BJ (cell line): ENCODE measurements at regions of chr10 and their contacts with region 1.

Region 1: DNA sequence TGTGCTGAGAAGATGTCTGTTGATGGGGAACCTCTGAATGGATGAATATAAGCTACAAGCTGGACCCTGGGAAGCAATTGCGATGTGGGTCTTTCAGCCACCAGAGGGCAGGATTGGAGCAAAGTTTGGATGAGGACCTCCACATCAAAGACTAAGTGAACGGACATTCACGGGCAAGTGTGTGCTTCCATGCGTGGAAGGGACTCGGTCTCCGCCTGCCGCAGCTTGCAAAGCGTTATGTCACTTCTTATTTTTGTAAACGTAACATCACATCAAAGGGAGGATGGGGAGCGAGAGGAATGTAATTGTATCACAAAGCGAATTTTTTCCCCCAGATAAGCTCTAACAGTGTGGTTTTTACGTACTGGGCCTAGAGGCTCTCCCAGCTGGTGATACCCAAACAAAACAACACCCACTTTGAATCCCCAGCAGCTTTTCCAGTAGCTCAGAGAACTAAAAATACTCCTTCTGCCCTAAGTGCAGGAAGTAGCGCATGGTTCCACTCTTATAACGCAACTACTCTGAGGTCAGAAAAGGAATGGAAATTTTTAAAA is 65.0 kb downstream of the VWA2 start:
- DNase-seq: peak; percentile 40
- H3K4me3 ChIP-seq: peak overlapping the region; percentile 23
- H3K27me3 ChIP-seq: peaks cover 2% of the 10 kb centered on the region; the same call in 1 of the 2 replicates
- CTCF ChIP-seq: peak; percentile 81

Region 2: DNA sequence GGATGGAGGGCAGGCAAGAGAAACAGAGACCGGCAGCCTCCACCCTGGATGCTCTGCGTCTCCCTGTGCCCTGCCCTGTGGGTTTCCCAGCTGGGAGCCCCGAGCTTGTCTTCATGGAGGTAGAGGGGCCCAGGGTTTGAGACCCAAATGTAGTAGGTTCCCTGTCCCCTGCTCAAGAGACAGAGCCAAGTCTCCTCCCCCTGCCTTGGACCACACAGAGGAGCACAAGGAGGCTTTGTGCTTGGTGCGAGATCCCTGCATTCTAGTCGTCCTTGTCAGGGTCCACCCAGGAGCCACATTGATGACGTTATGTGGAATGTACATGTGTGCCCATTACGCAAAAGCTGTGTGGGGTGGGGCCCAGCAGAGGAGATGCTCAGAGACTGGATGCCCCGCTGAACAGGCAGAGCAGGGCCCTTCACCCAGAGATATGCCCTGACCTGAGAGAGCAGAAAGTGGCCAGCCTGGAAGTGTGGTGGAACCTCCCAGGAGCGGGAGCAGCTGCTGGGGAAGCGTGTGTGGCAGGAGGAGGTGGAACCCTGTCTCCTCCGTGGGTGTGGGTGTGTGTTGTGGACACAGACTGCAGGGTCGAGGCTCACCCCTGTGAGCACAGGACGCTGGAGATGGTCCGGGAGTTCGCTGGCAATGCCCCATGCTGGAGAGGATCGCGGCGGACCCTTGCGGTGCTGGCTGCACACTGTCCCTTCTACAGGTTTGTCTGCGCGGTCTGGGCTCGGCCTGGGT is 25.8 kb before region 1 on chr10:
- CTCF ChIA-PET with region 1: interaction called, 11 read pairs
- POLR2A ChIA-PET with region 1: no interaction called
- DNase-seq: no peak
- H3K4me3 ChIP-seq: no peak overlapping the region
- H3K27me3 ChIP-seq: peaks cover 12% of the 10 kb centered on the region
- CTCF ChIP-seq: no peak

Region 3: DNA sequence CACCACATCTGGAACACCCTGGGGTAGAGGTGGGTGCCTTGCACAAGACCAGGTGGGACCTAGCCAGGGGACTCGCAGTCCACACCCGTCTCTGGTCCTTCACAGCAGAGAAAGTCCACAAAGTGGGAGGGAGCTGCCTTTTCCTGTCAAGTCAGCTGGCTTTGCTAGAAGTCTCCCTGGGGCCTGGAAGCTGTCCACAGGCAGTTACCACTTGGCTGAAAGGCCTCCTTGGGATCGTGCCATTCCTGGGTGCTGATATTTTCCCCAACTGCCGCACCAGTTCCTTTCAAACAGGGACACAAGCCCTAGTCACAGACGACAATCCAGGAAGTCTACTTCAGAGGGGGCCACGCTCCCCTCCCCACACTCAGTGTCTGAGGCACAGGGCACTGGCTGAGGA is 24.8 kb after region 1 on chr10:
- CTCF ChIA-PET with region 1: interaction called, 14 read pairs
- POLR2A ChIA-PET with region 1: interaction called, 6 read pairs
- DNase-seq: no peak
- H3K4me3 ChIP-seq: no peak overlapping the region
- H3K27me3 ChIP-seq: no peaks in the 10 kb centered on the region; the same call in 1 of the 2 replicates
- CTCF ChIP-seq: no peak

Region 4: GRCh38 chr10:114437456-114438292 is 133.6 kb after region 1 on chr10:
- CTCF ChIA-PET with region 1: interaction called, 28 read pairs
- POLR2A ChIA-PET with region 1: no interaction called
- DNase-seq: no peak
- H3K4me3 ChIP-seq: no peak overlapping the region
- H3K27me3 ChIP-seq: no peaks in the 10 kb centered on the region
- CTCF ChIP-seq: peak; percentile 56

Region 5: GRCh38 chr10:114550756-114551635 is 246.9 kb after region 1 on chr10:
- CTCF ChIA-PET with region 1: interaction called, 31 read pairs
- POLR2A ChIA-PET with region 1: no interaction called
- DNase-seq: no peak
- H3K4me3 ChIP-seq: no peak overlapping the region
- H3K27me3 ChIP-seq: no peaks in the 10 kb centered on the region
- CTCF ChIP-seq: peak; percentile 13; the same call in 1 of the 2 replicates